Spleen (tissue), 13 donors: ENCODE measurements at regions of chr10 and their contacts with region 1.

Region 1: DNA sequence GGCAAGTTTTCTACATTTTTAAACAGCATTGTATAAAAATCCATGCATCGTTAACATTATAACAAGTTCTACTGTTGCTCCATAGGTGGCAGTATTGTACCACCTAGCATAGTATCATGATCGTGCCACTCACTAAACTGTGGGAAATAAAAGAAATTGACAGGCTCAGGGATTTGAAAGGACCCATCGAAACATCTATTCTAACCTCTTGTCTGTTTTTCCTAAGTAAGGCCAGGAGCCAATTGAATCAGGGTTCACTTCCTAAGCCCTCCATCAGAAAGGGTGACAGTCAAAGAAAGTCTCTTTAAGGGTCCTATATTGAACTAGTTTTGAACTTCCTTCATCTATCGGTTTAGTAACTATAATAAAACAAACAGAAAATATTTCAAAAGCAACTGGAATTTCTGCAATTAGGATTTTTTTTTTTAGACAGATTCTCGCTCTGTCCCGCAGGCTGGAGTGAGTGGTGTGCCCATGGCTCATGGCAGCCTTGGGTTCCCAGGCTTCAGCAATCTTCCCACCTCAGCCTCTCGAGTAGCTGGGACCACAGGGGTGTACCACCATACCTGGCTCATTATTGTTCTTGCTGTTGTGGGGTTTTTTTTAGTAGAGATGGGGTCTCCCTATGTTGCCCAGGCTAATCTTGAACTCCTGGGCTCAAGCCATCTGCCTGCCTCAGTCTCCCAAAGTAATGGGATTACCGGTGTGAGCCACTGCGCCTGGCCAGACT is 9.4 kb downstream of the HACD1 start:
- DNase-seq: no peak
- H3K4me3 ChIP-seq: no peak overlapping the region
- H3K27ac ChIP-seq: no peak overlapping the region
- H3K4me1 ChIP-seq: peaks cover 0 to 5% (median 0%) of the 10 kb centered on the region in 6 donors
- H3K27me3 ChIP-seq: no peaks in the 10 kb centered on the region
- CTCF ChIP-seq: peak; percentile 60 to 83 (median 76)
- POLR2A ChIP-seq: no peak

Region 2: DNA sequence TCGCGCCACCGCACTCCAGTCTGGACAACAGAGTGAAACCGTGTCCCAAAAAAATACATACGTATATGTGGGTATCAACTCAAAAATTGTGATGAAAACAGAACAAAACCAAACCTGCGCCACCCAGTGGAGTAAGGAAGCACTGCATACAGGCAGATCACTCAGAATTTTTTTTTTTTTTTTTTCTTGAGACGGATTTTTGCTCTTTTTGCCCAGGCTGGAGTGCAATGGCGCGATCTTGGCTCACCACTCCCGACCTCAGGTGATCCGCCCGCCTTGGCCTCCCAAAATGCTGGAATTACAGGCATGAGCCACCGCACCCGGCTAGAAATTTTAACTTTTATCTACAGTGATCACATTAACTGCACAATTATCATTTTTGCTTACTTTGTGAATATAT is 135.2 kb after region 1 on chr10:
- intact Hi-C with region 1: loop called (anchors 5 kb)
- DNase-seq: no peak
- H3K4me3 ChIP-seq: no peak overlapping the region
- H3K27ac ChIP-seq: peak overlapping the region in 1 of 8 donors; percentile 76
- H3K4me1 ChIP-seq: peaks cover 5 to 31% (median 21%) of the 10 kb centered on the region in 6 donors
- H3K27me3 ChIP-seq: no peaks in the 10 kb centered on the region
- CTCF ChIP-seq: peak; percentile 66 to 90 (median 81)
- POLR2A ChIP-seq: no peak

Region 3: GRCh38 chr10:18044976-18045720 is 437.4 kb after region 1 on chr10:
- intact Hi-C with region 1: no loop called
- DNase-seq: no peak
- H3K4me3 ChIP-seq: no peak overlapping the region
- H3K27ac ChIP-seq: no peak overlapping the region
- H3K4me1 ChIP-seq: no peaks in the 10 kb centered on the region
- H3K27me3 ChIP-seq: no peaks in the 10 kb centered on the region
- CTCF ChIP-seq: no peak
- POLR2A ChIP-seq: no peak

Region 4: GRCh38 chr10:18109341-18109870 is 501.6 kb after region 1 on chr10:
- intact Hi-C with region 1: loop called (anchors 5 kb)
- DNase-seq: no peak
- H3K4me3 ChIP-seq: no peak overlapping the region
- H3K27ac ChIP-seq: no peak overlapping the region
- H3K4me1 ChIP-seq: no peaks in the 10 kb centered on the region
- H3K27me3 ChIP-seq: no peaks in the 10 kb centered on the region
- CTCF ChIP-seq: no peak
- POLR2A ChIP-seq: no peak

Region 5: DNA sequence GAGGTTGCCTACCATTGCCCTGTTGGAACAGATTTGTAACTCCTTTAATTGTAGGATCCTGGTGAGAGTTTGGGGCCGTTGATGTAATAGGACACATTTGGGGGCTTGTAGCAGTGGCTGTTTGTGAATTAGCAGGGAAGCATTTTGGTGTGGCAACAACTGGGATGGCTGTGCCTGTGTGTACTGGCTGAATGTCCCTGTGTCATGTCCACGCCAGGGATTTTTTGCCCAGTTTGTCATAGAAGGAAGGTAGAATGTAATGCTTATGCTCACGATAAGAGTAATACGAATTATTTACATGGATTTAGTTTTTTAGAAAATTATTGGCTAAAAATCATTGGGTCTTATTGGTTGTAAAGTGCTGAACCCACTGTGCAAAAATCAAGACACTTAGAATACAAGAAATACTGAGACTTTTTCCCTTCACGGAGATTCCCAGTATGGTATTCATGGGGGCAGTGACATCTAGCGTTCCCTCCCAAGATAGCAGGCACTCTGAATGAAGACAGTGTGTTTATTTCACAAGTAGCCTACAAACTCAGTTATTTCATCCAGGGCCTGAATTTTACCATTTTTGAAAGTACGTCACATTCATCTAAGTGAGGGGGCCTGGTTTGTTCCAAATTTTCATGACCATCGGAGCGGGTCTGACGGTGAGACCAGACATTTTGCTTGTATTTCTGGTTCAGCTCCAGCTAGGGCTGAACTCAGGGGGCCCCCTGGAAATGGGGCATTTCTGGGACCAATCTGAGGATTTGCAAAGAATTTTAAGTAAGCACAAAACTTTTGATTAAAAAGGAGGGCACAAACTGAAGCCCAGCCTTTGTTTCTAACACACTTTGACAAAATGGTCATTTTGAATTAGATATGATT is 607.2 kb after region 1 on chr10:
- intact Hi-C with region 1: loop called (anchors 10 kb)
- DNase-seq: no peak
- H3K4me3 ChIP-seq: no peak overlapping the region
- H3K27ac ChIP-seq: no peak overlapping the region
- H3K4me1 ChIP-seq: no peaks in the 10 kb centered on the region
- H3K27me3 ChIP-seq: no peaks in the 10 kb centered on the region
- CTCF ChIP-seq: peak in 9 of 11 experiments; percentile 29 to 66 (median 45)
- POLR2A ChIP-seq: no peak